GM12878 (cell line): ENCODE measurements at regions of chr20 and their contacts with region 1.

Region 1: GRCh38 chr20:61841966-61842365 is 223.7 kb downstream of the TAF4 start:
- DNase-seq: no peak
- ATAC-seq: no peak
- H3K4me3 ChIP-seq: no peak overlapping the region
- H3K27ac ChIP-seq: no peak overlapping the region
- H3K4me1 ChIP-seq: no peaks in the 10 kb centered on the region
- H3K27me3 ChIP-seq: no peaks in the 10 kb centered on the region
- CTCF ChIP-seq: no peak
- EP300 ChIP-seq: no peak
- POLR2A ChIP-seq: no peak
- RAD21 ChIP-seq: no peak

Region 2: GRCh38 chr20:60993433-60994044 is 848.4 kb before region 1 on chr20:
- CTCF ChIA-PET with region 1: no interaction called
- POLR2A ChIA-PET with region 1: no interaction called
- RAD21 ChIA-PET with region 1: no interaction called
- SMC1A ChIA-PET with region 1: no interaction called
- in situ Hi-C with region 1: loop called (anchors 25 kb)
- intact Hi-C with region 1: no loop called
- DNase-seq: no peak
- ATAC-seq: no peak
- H3K4me3 ChIP-seq: no peak overlapping the region
- H3K27ac ChIP-seq: no peak overlapping the region
- H3K4me1 ChIP-seq: no peaks in the 10 kb centered on the region
- H3K27me3 ChIP-seq: no peaks in the 10 kb centered on the region
- CTCF ChIP-seq: no peak
- EP300 ChIP-seq: no peak
- POLR2A ChIP-seq: no peak
- RAD21 ChIP-seq: no peak

Region 3: DNA sequence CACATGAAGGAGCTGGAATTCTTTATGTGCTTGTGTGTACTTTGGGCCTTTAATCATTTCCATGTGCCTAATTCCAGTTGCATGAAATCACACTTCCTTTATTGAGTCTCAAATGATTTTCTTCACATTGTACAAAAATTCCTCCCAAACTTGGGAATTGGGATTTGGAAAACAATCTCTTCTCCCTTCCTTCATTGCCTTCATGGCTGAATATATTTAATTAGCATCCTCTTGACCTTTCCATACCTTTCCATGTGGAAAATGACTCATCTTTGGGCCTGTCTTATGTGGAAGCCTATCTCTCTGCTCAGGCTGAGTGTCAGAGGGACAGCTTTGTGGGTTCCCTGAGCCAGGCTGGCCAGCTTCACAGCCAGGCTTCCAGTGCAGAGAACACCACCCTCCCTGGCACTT is 622.9 kb before region 1 on chr20:
- CTCF ChIA-PET with region 1: no interaction called
- POLR2A ChIA-PET with region 1: no interaction called
- RAD21 ChIA-PET with region 1: no interaction called
- SMC1A ChIA-PET with region 1: no interaction called
- in situ Hi-C with region 1: loop called (anchors 25 kb)
- intact Hi-C with region 1: no loop called
- DNase-seq: no peak
- ATAC-seq: no peak
- H3K4me3 ChIP-seq: no peak overlapping the region
- H3K27ac ChIP-seq: no peak overlapping the region
- H3K4me1 ChIP-seq: no peaks in the 10 kb centered on the region
- H3K27me3 ChIP-seq: no peaks in the 10 kb centered on the region
- CTCF ChIP-seq: no peak
- EP300 ChIP-seq: no peak
- POLR2A ChIP-seq: no peak
- RAD21 ChIP-seq: no peak

Region 4: GRCh38 chr20:61797200-61797599 is 44.8 kb before region 1 on chr20:
- CTCF ChIA-PET with region 1: no interaction called
- POLR2A ChIA-PET with region 1: no interaction called
- RAD21 ChIA-PET with region 1: no interaction called
- SMC1A ChIA-PET with region 1: no interaction called
- in situ Hi-C with region 1: loop called (anchors 5 kb)
- intact Hi-C with region 1: no loop called
- DNase-seq: no peak
- ATAC-seq: no peak
- H3K4me3 ChIP-seq: no peak overlapping the region
- H3K27ac ChIP-seq: no peak overlapping the region
- H3K4me1 ChIP-seq: no peaks in the 10 kb centered on the region
- H3K27me3 ChIP-seq: no peaks in the 10 kb centered on the region
- CTCF ChIP-seq: no peak
- EP300 ChIP-seq: no peak
- POLR2A ChIP-seq: no peak
- RAD21 ChIP-seq: no peak